ENCODE measurements at regions of chr3 and their contacts with region 1.

Region 1: GRCh38 chr3:195522254-195523023 is 20.7 kb downstream of the PPP1R2 start:
- DNase-seq: no peak
- ATAC-seq: peak; percentile 22; the same call in 2 of the 3 replicates
- H3K4me3 ChIP-seq: no peak overlapping the region
- H3K27ac ChIP-seq: no peak overlapping the region
- H3K4me1 ChIP-seq: no peaks in the 10 kb centered on the region
- H3K27me3 ChIP-seq: no peaks in the 10 kb centered on the region
- CTCF ChIP-seq: peak; percentile 27 to 65 (median 48); a peak in 5 of 6 replicates
- EP300 ChIP-seq: no peak
- POLR2A ChIP-seq: no peak
- RAD21 ChIP-seq: peak; percentile 69

Region 2: DNA sequence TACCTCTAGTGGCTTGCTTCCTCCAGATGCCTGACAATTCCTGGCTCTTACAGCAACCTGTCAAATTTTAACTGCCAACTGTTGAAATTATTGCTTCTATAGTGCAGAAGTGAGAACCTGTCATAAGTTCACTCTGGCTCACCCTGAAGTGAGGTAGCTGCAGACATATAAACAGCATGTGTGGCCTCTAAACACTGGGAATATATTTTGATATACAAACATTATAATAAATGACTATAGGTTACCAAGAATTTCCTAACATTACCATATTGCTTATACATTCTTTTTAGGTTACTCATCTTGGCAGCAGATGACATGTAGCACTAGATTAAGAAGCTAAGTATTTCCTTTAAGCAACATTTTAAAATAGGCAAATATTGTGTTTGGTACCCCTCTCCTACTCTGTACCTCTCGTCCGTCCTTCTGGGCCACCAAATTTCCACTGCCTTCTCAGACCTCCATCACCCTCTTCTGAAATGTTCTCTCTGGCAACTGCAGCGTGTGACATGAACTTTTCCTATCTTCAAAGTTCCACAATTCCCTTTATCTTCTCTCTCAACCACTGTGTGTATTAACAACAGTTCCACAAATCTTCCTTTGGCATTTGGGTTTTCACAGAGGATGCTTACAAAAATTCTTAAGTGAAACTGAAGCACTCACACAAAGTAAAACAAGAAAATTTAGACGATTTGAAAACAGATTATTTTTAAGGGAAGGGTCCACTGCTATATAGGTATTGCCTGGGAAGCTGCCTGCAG is 236.1 kb before region 1 on chr3:
- CTCF ChIA-PET with region 1: interaction called, 10 read pairs
- POLR2A ChIA-PET with region 1: no interaction called
- RAD21 ChIA-PET with region 1: no interaction called
- SMC1A ChIA-PET with region 1: interaction called, 3 read pairs
- in situ Hi-C with region 1: no loop called
- intact Hi-C with region 1: no loop called
- DNase-seq: no peak
- ATAC-seq: no peak
- H3K4me3 ChIP-seq: no peak overlapping the region
- H3K27ac ChIP-seq: no peak overlapping the region
- H3K4me1 ChIP-seq: no peaks in the 10 kb centered on the region
- H3K27me3 ChIP-seq: no peaks in the 10 kb centered on the region
- CTCF ChIP-seq: no peak
- EP300 ChIP-seq: no peak
- POLR2A ChIP-seq: no peak
- RAD21 ChIP-seq: no peak

Region 3: DNA sequence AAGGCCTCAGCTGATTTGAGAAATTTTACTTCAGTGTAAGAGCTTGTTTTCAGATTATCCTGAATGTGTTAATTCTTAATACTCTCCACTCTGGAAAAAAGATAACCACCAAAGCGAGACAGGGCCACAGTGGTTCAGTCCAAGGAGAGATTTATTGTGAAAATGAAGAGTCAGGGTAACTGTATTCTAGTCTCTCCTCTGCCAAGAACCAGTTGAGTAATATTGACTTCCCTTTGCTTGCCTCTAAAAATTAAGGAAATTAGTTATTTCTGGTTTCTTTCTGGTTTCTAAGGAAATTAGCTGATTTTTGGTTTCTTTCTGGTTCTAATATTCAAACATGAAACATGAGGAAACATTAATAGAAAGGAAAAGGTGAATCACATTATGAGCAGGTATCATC is 14.3 kb before region 1 on chr3:
- CTCF ChIA-PET with region 1: interaction called, 8 read pairs
- POLR2A ChIA-PET with region 1: no interaction called
- RAD21 ChIA-PET with region 1: interaction called, 3 read pairs
- SMC1A ChIA-PET with region 1: interaction called, 13 read pairs
- in situ Hi-C with region 1: no loop called
- intact Hi-C with region 1: no loop called
- DNase-seq: no peak
- ATAC-seq: no peak
- H3K4me3 ChIP-seq: no peak overlapping the region
- H3K27ac ChIP-seq: no peak overlapping the region
- H3K4me1 ChIP-seq: no peaks in the 10 kb centered on the region
- H3K27me3 ChIP-seq: no peaks in the 10 kb centered on the region
- CTCF ChIP-seq: no peak
- EP300 ChIP-seq: no peak
- POLR2A ChIP-seq: no peak
- RAD21 ChIP-seq: no peak

Region 4: DNA sequence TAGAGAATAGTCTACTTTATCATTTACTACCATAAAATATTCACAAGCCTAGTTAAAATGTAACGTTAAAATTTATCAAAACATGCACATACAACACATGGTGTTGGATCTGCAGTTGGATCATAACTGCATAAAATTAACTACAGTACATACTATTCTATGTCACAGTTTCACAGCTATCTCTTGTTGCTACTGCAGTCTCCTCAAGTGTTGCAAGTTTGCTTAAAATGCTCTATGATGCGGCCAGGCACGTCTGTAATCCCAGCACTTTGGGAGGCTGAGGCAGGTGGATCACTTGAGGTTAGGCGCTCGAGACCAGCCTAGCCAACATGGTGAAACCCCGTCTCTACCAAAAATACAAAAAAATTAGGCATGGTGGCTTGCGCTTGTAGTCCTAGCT is 10.4 kb after region 1 on chr3:
- CTCF ChIA-PET with region 1: interaction called, 14 read pairs
- POLR2A ChIA-PET with region 1: interaction called, 3 read pairs
- RAD21 ChIA-PET with region 1: interaction called, 4 read pairs
- SMC1A ChIA-PET with region 1: interaction called, 17 read pairs
- in situ Hi-C with region 1: no loop called
- intact Hi-C with region 1: no loop called
- DNase-seq: no peak
- ATAC-seq: peak; percentile 28
- H3K4me3 ChIP-seq: 0 out of 2 replicates have a peak overlapping the region, but pooled peaks have one; percentile 26
- H3K27ac ChIP-seq: no peak overlapping the region
- H3K4me1 ChIP-seq: peaks cover 11% of the 10 kb centered on the region
- H3K27me3 ChIP-seq: no peaks in the 10 kb centered on the region
- CTCF ChIP-seq: no peak
- EP300 ChIP-seq: no peak
- POLR2A ChIP-seq: no peak
- RAD21 ChIP-seq: no peak

Measured in GM12878 (cell line).